SK-N-SH (cell line): ENCODE measurements at regions of chr19 and their contacts with region 1.

Region 1: DNA sequence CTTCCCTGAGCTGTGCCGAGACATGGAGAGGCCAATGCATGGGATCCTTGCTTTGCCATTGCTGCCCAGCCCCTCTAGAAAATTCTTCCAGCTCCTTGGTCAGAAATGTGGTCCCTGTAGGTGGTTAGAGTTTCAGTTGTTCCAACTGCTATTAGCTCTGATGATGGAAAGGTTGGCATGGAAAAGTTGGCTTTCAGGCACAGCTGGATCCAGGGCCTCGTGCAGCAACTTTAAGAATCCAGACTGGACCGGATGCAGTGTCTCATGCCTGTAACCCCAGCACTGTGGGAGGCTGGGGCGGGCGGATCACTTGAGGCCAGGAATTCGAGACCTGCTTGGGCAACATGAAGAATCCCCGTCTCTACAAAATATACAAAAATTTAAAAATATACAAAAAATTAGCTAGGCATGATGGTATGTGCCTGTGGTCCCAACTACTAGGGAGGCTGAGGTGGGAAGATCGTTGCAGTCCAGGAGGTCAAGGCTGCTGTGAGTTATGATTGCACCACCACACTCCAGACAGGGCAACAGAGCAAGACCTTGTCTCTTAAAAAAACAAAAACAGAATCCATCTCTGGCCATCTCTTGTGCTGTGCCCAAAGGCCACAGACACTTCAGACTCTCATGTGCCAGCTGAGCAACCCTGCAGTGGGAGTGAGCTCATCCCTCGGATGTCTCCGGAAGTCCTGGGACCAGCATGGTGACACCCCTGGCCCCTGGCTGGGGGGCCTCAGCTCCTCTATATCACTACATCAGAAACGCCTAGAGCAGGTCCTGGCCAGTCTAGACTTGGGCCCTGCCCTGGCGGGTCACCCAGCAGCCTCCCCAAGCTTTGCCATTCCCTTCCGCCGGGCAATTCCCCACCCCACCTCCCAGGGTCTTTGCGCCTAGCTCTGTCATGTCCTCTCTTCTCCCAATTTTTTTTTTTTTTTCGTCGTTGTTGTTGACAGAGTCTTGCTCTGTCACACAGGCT is 16.8 kb downstream of the MEX3D start:
- DNase-seq: no peak
- H3K4me3 ChIP-seq: no peak overlapping the region
- H3K27ac ChIP-seq: no peak overlapping the region
- H3K4me1 ChIP-seq: no peaks in the 10 kb centered on the region; a peak in 1 of 4 replicates
- H3K27me3 ChIP-seq: no peaks in the 10 kb centered on the region
- CTCF ChIP-seq: no peak
- EP300 ChIP-seq: no peak
- RAD21 ChIP-seq: no peak

Region 2: GRCh38 chr19:1312767-1313694 is 238.3 kb before region 1 on chr19:
- CTCF ChIA-PET with region 1: no interaction called
- POLR2A ChIA-PET with region 1: no interaction called
- DNase-seq: no peak
- H3K4me3 ChIP-seq: no peak overlapping the region
- H3K27ac ChIP-seq: no peak overlapping the region
- H3K4me1 ChIP-seq: peaks cover 6 to 7% of the 10 kb centered on the region in 2 experiments; a peak in 2 of 4 replicates
- H3K27me3 ChIP-seq: no peaks in the 10 kb centered on the region
- CTCF ChIP-seq: no peak
- EP300 ChIP-seq: no peak
- RAD21 ChIP-seq: no peak

Region 3: GRCh38 chr19:1507763-1508509 is 43.4 kb before region 1 on chr19:
- CTCF ChIA-PET with region 1: interaction called, 11 read pairs
- POLR2A ChIA-PET with region 1: no interaction called
- DNase-seq: peak; percentile 100
- H3K4me3 ChIP-seq: peak overlapping the region; percentile 40 to 66
- H3K27ac ChIP-seq: peak overlapping the region; percentile 72 to 83
- H3K4me1 ChIP-seq: peaks cover 5 to 15% of the 10 kb centered on the region in 2 experiments; a peak in 2 of 4 replicates
- H3K27me3 ChIP-seq: 0 out of 2 replicates have a peak, but pooled peaks cover 3% of the 10 kb centered on the region
- CTCF ChIP-seq: no peak
- EP300 ChIP-seq: no peak
- RAD21 ChIP-seq: no peak

Region 4: DNA sequence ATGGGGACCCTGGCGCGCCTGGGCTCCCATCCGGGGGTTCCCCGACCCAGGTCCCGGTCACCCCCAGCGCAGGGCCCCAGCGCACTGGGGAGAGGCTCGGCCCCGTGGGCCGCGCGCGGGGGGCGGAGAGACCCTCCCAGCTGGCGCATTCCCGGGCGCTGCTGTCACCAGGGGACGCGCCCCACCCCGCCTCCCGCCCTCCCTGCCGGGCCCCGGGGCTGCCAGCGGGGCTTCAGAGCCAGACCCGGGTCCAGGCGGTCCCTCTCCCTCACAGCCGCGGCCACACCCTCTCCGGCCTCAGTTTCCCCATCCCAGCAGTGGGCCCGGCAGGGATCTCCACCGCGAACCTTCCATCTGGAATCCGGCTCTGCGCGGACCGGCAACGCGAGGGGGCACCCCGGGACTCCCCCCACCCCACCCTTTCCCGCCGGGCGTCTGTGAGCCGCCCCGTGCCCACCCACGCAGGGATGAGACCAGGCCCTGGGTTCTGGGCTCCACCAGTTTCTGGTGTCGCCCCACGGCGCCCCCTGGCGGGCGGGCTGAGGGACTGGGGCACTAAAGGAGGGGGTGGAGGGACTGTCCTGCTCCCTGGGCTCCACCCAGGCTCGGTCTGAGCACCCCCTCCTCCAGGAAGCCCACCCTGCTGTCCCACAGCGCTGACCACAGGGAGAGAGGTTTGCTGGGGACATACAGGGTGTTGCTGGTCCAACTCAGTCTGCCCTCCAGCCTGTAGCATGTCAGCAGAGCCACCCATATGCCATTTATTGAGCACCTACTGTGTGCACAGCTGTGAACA is 37.7 kb before region 1 on chr19:
- CTCF ChIA-PET with region 1: interaction called, 12 read pairs
- POLR2A ChIA-PET with region 1: no interaction called
- DNase-seq: peak; percentile 75
- H3K4me3 ChIP-seq: peak overlapping the region; percentile 52 to 65
- H3K27ac ChIP-seq: no peak overlapping the region
- H3K4me1 ChIP-seq: no peaks in the 10 kb centered on the region
- H3K27me3 ChIP-seq: no peaks in the 10 kb centered on the region
- CTCF ChIP-seq: peak; percentile 71
- EP300 ChIP-seq: no peak
- RAD21 ChIP-seq: no peak

Region 5: DNA sequence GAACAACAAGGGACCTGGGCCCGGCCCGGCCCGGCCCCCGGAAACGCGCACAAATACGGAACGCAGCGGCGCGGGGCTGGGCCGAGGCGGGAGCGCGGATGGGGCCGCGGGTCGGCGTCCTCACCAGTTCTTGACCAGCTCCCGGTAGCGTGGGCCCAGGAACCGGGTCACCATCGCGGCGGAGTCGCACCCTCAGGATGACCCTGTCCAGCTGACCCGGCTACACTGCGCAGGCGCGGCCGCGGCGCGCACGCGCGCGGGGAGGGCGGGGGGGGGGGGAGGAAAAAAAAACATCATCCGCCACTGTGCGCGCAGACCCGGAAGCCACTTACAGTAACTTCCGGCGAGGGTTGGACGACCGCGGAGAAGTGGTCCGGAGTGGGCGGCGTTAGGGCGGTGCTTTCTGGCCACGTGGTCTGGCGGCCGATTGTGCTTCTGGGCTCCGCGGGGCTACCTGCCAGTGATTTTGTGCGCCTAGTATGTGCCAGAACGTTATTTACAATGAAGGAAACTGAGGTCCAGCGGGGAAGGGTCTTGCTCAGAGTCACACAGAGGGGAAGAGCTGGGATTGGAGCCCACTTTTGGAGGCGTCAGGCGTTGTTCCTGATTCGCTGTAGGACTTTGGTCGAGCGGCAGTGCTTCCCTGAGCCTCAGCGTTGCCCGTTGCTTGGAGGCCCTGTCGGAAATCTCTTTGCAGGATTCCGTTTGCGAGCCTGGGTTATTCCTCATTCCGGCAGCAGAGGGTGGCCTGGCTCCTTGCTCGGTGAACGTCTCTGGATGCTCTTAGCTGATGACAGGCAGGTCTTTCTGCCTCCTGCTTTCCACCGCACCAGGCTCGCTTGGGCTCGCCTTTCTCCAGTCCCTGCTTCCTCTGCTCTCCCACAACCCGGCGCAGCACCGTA is 54.1 kb after region 1 on chr19 and contains the start of gene UQCR11:
- CTCF ChIA-PET with region 1: interaction called, 11 read pairs
- POLR2A ChIA-PET with region 1: no interaction called
- DNase-seq: peak; percentile 100
- H3K4me3 ChIP-seq: peak within 1 kb of the TSS; percentile 73 to 99
- H3K27ac ChIP-seq: peak within 1 kb of the TSS; percentile 76 to 94
- H3K4me1 ChIP-seq: peaks cover 5 to 9% of the 10 kb centered on the region in 2 experiments; a peak in 2 of 4 replicates
- H3K27me3 ChIP-seq: no peaks in the 10 kb centered on the region
- CTCF ChIP-seq: peak; percentile 63
- EP300 ChIP-seq: no peak
- RAD21 ChIP-seq: peak; percentile 73
- polyA plus RNA-seq, gene UQCR11: 247 and 372 TPM in 2 replicates

Region 6: GRCh38 chr19:1767464-1767933 is 216.1 kb after region 1 on chr19:
- CTCF ChIA-PET with region 1: interaction called, 17 read pairs
- POLR2A ChIA-PET with region 1: no interaction called
- DNase-seq: peak; percentile 96
- H3K4me3 ChIP-seq: no peak overlapping the region
- H3K27ac ChIP-seq: no peak overlapping the region
- H3K4me1 ChIP-seq: no peaks in the 10 kb centered on the region
- H3K27me3 ChIP-seq: peaks cover 61% of the 10 kb centered on the region
- CTCF ChIP-seq: peak; percentile 92
- EP300 ChIP-seq: no peak
- RAD21 ChIP-seq: peak; percentile 69

Region 7: DNA sequence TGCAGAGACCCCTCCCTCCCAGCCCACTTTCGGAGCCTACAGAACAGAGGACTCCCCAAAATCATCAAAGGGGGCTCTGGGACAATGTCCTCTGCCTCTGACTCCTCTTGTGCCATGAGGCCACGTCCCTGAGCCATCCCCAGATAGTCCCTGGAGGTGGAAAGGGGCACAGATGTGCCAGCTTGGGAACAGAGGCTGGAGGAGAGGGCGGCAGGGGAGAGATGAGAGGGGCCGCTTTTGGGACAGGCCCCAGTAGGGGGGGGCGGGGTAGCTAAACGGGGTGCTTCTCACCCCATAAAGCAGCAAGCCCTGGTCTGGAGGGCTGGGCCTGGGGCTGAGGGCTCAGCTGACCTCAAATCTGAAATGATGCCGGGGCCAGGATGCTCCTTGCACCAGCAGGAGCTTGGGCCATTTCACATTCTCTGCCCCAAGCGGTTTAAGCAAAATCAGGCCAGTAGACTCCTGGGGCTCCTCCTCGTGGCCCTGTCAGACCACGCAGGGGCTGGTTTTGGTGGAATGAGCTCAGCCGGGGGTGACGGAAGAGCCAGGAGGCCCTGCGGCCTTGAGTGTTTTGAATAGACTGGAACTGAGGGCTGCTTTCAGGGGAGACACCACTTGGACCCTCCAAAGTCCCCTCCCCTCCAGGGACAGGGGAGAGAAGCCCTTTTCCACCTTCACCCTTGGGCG is 229.1 kb after region 1 on chr19:
- CTCF ChIA-PET with region 1: interaction called, 18 read pairs
- POLR2A ChIA-PET with region 1: no interaction called
- DNase-seq: peak; percentile 55
- H3K4me3 ChIP-seq: no peak overlapping the region
- H3K27ac ChIP-seq: no peak overlapping the region
- H3K4me1 ChIP-seq: no peaks in the 10 kb centered on the region
- H3K27me3 ChIP-seq: peaks cover 74% of the 10 kb centered on the region
- CTCF ChIP-seq: peak; percentile 27; the same call in 1 of the 2 replicates
- EP300 ChIP-seq: no peak
- RAD21 ChIP-seq: no peak